ENCODE measurements at regions of chr3 and their contacts with region 1.

Region 1: GRCh38 chr3:112531358-112531781 is 30.4 kb downstream of the ATG3 start:
- DNase-seq: no peak
- ATAC-seq: no peak
- H3K4me3 ChIP-seq: no peak overlapping the region
- H3K27ac ChIP-seq: no peak overlapping the region
- H3K4me1 ChIP-seq: no peaks in the 10 kb centered on the region
- H3K27me3 ChIP-seq: no peaks in the 10 kb centered on the region
- CTCF ChIP-seq: peak in 8 of 9 donors; percentile 21 to 73 (median 60)

Region 2: GRCh38 chr3:112111785-112112402 is 419.5 kb before region 1 on chr3:
- intact Hi-C with region 1: loop called in 5 of 10 experiments (anchors 5 to 10 kb)
- DNase-seq: peak in 1 of 2 donors; percentile 54
- ATAC-seq: peak in 7 of 8 donors; percentile 54 to 80 (median 76)
- H3K4me3 ChIP-seq: no peak overlapping the region
- H3K27ac ChIP-seq: no peak overlapping the region
- H3K4me1 ChIP-seq: peaks cover 0 to 17% (median 9%) of the 10 kb centered on the region in 9 donors
- H3K27me3 ChIP-seq: no peaks in the 10 kb centered on the region
- CTCF ChIP-seq: peak; percentile 37 to 88 (median 78)

Region 3: GRCh38 chr3:112120485-112120836 is 410.9 kb before region 1 on chr3:
- intact Hi-C with region 1: loop called in 4 of 10 experiments (anchors 5 to 10 kb)
- DNase-seq: no peak
- ATAC-seq: no peak
- H3K4me3 ChIP-seq: no peak overlapping the region
- H3K27ac ChIP-seq: no peak overlapping the region
- H3K4me1 ChIP-seq: peaks cover 0 to 35% (median 15%) of the 10 kb centered on the region in 9 donors
- H3K27me3 ChIP-seq: no peaks in the 10 kb centered on the region
- CTCF ChIP-seq: no peak

Region 4: GRCh38 chr3:112233081-112233480 is 298.3 kb before region 1 on chr3:
- intact Hi-C with region 1: no loop called
- DNase-seq: no peak
- ATAC-seq: no peak
- H3K4me3 ChIP-seq: no peak overlapping the region
- H3K27ac ChIP-seq: no peak overlapping the region
- H3K4me1 ChIP-seq: no peaks in the 10 kb centered on the region
- H3K27me3 ChIP-seq: no peaks in the 10 kb centered on the region
- CTCF ChIP-seq: no peak

Measured in heart right ventricle (tissue), 16 donors.